Activated B cell treated with CpG ODN at 0.5 μM for 24 hours (primary cell): ENCODE measurements at regions of chr6 and their contacts with region 1.

Region 1: GRCh38 chr6:15245361-15246216 is at the start of gene JARID2:
- DNase-seq: peak; percentile 94
- ATAC-seq: peak; percentile 61
- H3K4me3 Mint-ChIP-seq: peak within 1 kb of the TSS; percentile 100
- H3K27ac Mint-ChIP-seq: peak within 1 kb of the TSS; percentile 96
- H3K4me1 Mint-ChIP-seq: peaks cover 32% of the 10 kb centered on the region
- H3K27me3 Mint-ChIP-seq: no peaks in the 10 kb centered on the region
- CTCF ChIP-seq: no peak
- total RNA-seq, gene JARID2: 27.0 and 28.5 TPM in 2 replicates

Region 2: DNA sequence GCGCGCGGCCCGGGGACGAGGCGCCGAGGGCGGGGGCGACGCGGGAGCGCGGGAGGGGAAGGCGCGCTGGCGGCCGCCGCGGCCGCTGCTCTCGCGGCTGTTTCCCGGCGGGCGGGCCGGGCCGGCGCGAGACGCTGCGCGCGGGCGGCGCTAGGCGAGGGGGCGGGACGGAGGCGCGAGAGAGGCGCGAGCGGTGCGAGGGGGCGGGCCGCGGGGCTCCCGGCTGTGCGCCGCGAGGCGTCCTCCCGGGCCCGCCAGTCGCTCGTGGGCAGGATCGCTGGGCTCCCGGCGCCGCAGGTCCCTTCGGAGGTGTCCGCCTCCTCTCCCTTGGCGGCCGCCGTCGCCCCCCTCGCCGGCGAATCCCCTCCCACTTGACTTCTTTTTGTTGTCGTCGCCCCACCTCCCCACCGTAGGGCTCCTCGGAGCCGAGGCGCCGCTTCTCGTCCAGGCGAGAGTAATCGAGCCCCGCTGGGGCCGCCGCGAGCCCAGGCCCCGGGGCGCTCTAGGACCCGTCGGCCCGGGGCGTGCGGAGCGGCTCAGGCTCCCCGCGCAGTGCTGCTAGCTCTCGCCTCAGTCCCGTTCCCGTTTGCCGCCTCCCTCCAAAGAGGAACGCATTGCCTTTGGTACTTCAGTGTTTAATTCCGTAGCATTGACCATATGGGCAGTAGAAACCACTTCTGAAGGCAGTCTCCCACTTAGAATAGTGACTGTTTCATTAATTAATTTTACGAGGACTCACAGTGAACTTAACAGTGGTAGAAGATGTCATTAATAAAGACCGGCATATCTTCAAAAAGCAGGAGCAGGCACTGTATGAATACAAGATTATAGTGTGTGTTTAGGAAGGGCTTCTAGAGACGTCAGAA is 1533.6 kb before region 1 on chr6 and contains the start of gene RANBP9:
- CTCF ChIA-PET with region 1: no interaction called
- POLR2A ChIA-PET with region 1: no interaction called
- intact Hi-C with region 1: loop called (anchors 5 kb)
- DNase-seq: peak; percentile 92
- ATAC-seq: peak; percentile 83
- H3K4me3 Mint-ChIP-seq: peak within 1 kb of the TSS; percentile 97
- H3K27ac Mint-ChIP-seq: peak within 1 kb of the TSS; percentile 99
- H3K4me1 Mint-ChIP-seq: peaks cover 44% of the 10 kb centered on the region
- H3K27me3 Mint-ChIP-seq: no peaks in the 10 kb centered on the region
- CTCF ChIP-seq: no peak
- total RNA-seq, gene RANBP9: 30.7 and 34.7 TPM in 2 replicates

Region 3: DNA sequence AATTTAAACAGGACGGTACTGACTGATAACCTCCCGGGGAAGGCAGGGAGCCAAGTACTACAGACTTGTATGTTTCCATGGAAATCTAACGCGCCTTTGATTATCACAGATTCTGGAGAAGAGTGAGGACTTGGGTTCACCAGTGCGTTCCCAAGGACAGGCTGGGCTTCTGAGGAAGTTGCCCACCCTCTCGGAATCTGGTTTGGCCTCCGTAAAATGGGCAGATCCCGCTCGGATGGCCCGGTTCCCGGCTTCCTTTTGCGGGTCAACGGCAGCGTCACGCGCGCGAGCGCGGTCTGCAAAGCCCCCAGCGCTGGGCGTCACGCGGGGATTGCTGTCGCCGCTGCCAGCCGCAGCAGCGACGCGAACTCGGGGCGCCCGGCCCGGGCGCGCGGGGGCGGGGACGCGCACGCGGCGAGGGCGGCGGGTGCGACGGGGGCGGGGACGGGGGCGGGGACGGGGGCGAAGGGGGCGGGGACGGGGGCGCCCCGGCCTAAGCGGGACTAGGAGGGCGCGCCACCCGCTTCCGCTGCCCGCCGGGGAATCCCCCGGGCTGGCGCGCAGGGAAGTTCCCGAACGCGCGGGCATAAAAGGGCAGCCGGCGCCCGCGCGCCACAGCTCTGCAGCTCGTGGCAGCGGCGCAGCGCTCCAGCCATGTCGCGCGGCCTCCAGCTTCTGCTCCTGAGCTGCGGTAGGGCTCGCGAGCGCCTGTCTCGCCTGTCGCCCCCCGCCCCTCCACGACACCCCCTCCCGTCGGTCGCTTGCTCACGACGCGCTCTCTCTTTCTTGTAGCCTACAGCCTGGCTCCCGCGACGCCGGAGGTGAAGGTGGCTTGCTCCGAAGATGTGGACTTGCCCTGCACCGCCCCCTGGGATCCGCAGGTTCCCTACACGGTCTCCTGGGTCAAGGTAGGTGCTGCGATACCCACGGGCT is 1128.2 kb before region 1 on chr6 and contains the start of gene CD83:
- CTCF ChIA-PET with region 1: no interaction called
- POLR2A ChIA-PET with region 1: no interaction called
- intact Hi-C with region 1: loop called (anchors 2 kb)
- DNase-seq: peak; percentile 91
- ATAC-seq: peak; percentile 72
- H3K4me3 Mint-ChIP-seq: peak within 1 kb of the TSS; percentile 95
- H3K27ac Mint-ChIP-seq: peak within 1 kb of the TSS; percentile 94
- H3K4me1 Mint-ChIP-seq: peaks cover 47% of the 10 kb centered on the region
- H3K27me3 Mint-ChIP-seq: no peaks in the 10 kb centered on the region
- CTCF ChIP-seq: no peak
- total RNA-seq, gene CD83: 483 and 492 TPM in 2 replicates

Region 4: GRCh38 chr6:14660806-14661579 is 584.6 kb before region 1 on chr6:
- CTCF ChIA-PET with region 1: no interaction called
- POLR2A ChIA-PET with region 1: interaction called, 3 read pairs
- intact Hi-C with region 1: loop called (anchors 5 kb)
- DNase-seq: peak; percentile 38
- ATAC-seq: peak; percentile 75
- H3K4me3 Mint-ChIP-seq: no peak overlapping the region
- H3K27ac Mint-ChIP-seq: no peak overlapping the region
- H3K4me1 Mint-ChIP-seq: peaks cover 24% of the 10 kb centered on the region
- H3K27me3 Mint-ChIP-seq: no peaks in the 10 kb centered on the region
- CTCF ChIP-seq: no peak

Region 5: GRCh38 chr6:14784596-14785492 is 460.7 kb before region 1 on chr6:
- CTCF ChIA-PET with region 1: no interaction called
- POLR2A ChIA-PET with region 1: no interaction called
- intact Hi-C with region 1: no loop called
- DNase-seq: no peak
- ATAC-seq: no peak
- H3K4me3 Mint-ChIP-seq: no peak overlapping the region
- H3K27ac Mint-ChIP-seq: no peak overlapping the region
- H3K4me1 Mint-ChIP-seq: peaks cover 30% of the 10 kb centered on the region
- H3K27me3 Mint-ChIP-seq: no peaks in the 10 kb centered on the region
- CTCF ChIP-seq: no peak

Region 6: GRCh38 chr6:14910692-14911547 is 334.7 kb before region 1 on chr6:
- CTCF ChIA-PET with region 1: no interaction called
- POLR2A ChIA-PET with region 1: no interaction called
- intact Hi-C with region 1: loop called (anchors 2 kb)
- DNase-seq: peak; percentile 34
- ATAC-seq: peak; percentile 92
- H3K4me3 Mint-ChIP-seq: peak overlapping the region; percentile 70
- H3K27ac Mint-ChIP-seq: peak overlapping the region; percentile 88
- H3K4me1 Mint-ChIP-seq: peaks cover 41% of the 10 kb centered on the region
- H3K27me3 Mint-ChIP-seq: no peaks in the 10 kb centered on the region
- CTCF ChIP-seq: no peak

Region 7: DNA sequence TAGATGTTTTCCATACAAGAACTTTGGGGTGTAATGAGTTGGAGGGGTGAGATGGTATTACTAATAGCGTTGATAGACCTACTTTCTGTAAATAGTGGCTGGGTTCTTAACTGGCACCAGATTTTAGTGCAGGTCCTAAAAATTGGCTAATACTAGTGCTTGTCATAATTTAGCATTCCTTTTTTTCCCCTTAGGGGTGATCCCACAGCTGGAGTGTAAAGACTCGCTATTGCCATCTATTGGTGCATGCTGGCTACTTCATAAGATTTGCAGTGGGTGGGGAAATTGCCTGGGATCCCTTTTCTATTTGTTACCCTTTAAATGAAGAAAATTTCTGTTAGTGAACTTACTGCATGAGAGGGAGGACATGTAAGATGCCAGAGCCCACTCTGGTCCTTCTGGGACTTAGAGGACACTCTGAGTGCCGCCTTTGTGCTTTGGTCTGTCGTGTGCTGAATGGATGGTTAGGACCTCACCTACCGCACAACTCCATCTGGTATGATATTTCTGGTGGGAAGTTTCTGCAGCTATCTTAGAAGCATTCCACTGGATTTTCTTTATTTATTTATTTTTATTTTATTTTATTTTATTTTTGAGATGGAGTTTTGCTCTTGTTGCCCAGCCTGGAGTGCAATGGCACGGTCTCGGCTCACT is 195.8 kb after region 1 on chr6:
- CTCF ChIA-PET with region 1: interaction called, 5 read pairs
- POLR2A ChIA-PET with region 1: no interaction called
- intact Hi-C with region 1: loop called (anchors 2 kb)
- DNase-seq: no peak
- ATAC-seq: peak; percentile 71
- H3K4me3 Mint-ChIP-seq: no peak overlapping the region
- H3K27ac Mint-ChIP-seq: peak overlapping the region; percentile 5
- H3K4me1 Mint-ChIP-seq: peaks cover 67% of the 10 kb centered on the region
- H3K27me3 Mint-ChIP-seq: no peaks in the 10 kb centered on the region
- CTCF ChIP-seq: no peak